Astrocyte of the cerebellum (primary cell): ENCODE measurements at regions of chr9 and their contacts with region 1.

Region 1: DNA sequence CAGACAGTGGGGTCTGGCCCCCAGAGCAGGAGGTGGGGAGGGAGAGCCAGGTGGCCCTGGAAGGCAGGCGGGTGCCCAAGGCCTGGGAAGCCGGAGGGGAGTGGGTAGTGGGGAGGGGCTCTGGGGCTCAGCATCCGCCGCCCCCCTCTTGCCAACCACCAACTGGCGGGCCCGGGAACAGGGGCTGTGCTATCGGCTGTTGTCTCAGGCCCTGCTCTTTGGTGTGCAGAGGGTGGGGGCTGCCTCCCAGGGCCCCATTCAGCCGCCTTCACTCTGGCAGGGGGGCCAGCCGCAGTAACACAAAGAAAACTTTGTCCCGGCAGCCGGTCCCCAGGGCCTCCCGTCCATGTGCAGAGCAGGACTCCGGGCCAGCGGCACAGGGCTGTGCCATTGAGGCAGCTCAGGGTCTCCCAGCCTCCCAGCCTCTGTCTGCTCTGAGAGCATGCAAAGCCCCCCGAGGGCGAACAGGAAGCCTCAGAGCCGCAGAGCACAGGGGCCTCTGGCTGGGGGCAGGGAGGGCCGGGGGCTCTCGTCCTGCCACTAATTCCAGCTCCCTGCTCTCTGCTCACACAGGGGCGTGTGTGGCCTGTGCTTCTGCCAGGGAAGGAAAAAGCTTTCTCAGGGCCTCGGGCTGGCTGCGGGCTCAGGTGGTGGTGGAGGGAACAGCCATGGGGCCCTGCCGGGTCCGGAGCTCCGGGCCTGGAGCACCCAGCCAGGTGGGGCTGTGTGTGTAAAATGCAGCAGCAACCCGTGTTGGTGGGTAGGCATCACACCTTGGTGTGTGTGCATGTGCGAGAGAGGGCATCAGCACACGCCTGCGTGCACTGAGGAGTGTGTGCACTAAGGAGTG is 54.2 kb upstream of the NOTCH1 start:
- DNase-seq: no peak
- H3K4me3 ChIP-seq: no peak overlapping the region
- CTCF ChIP-seq: no peak

Region 2: GRCh38 chr9:136558373-136558772 is 41.7 kb before region 1 on chr9:
- in situ Hi-C with region 1: loop called (anchors 5 kb)
- DNase-seq: no peak
- H3K4me3 ChIP-seq: no peak overlapping the region
- CTCF ChIP-seq: no peak